Heart right ventricle (tissue), 16 donors: ENCODE measurements at regions of chr10 and their contacts with region 1.

Region 1: GRCh38 chr10:45249978-45250693 is 65.3 kb downstream of the OR13A1 start:
- DNase-seq: no peak
- ATAC-seq: peak in 7 of 8 donors; percentile 28 to 76 (median 51)
- H3K4me3 ChIP-seq: peak overlapping the region in 6 of 10 donors; percentile 5 to 36 (median 21)
- H3K27ac ChIP-seq: no peak overlapping the region
- H3K4me1 ChIP-seq: peaks cover 0 to 14% (median 0%) of the 10 kb centered on the region in 9 donors
- H3K27me3 ChIP-seq: peaks cover 0 to 10% (median 0%) of the 10 kb centered on the region in 7 donors
- CTCF ChIP-seq: peak; percentile 47 to 77 (median 70)

Region 2: DNA sequence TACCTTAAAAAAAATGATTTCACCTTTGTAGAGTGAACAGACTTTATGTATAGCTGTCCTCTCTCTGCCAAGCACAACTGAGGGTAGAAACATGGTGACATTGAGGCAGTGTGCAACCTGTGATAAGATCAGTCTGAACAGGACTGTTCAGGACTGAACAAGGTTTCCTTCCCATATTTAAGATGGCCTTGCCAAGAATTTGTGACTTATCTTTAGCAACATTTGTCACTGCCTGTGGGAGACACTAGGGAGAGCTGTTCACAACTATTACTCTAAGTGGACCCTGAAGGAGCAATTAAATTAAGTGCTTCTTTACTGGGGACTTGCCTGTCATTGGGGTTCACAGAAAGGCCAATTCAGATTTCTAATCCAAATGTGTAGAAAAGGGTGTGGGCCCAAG is 58.6 kb after region 1 on chr10:
- intact Hi-C with region 1: loop called in 1 of 10 experiments (anchors 10 kb)
- DNase-seq: no peak
- ATAC-seq: peak in 3 of 8 donors; percentile 19 to 31 (median 30)
- H3K4me3 ChIP-seq: no peak overlapping the region
- H3K27ac ChIP-seq: no peak overlapping the region
- H3K4me1 ChIP-seq: no peaks in the 10 kb centered on the region
- H3K27me3 ChIP-seq: peaks cover 0 to 10% (median 0%) of the 10 kb centered on the region in 7 donors
- CTCF ChIP-seq: peak in 4 of 9 donors; percentile 23 to 34 (median 30)

Region 3: DNA sequence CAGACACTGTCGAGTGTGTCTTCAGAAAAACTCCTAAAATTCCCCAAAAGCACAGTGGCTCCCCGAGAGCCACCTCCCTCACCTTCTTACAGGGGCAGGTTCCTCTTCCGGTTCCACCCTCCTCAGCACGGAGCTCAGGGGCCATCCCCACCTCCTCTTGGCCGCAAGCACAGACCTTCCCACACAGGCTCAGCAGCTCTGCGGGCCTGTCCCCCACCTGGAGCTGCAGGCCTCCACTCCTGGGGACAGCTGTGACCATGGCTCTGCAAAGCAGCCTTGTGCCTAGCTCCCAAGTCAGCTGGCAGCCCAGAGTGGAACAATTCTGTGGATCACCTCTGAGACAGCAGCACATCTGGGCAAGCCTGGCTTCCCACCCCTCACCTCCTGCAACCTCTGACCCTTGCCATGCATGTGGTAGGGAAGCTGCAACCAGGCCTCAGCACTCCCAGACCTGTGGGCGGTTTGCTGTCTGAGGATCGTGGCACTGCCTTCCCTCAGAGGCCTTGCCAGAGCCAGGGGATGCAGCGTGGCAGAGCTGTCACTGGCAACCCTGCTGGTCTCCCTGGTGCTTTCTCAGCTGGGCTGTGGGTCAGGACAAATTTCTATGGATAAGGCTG is 203.6 kb after region 1 on chr10:
- intact Hi-C with region 1: loop called in 1 of 10 experiments (anchors 10 kb)
- DNase-seq: no peak
- ATAC-seq: peak in 3 of 8 donors; percentile 20 to 66 (median 48)
- H3K4me3 ChIP-seq: no peak overlapping the region
- H3K27ac ChIP-seq: peak overlapping the region in 7 of 10 donors; percentile 18 to 67 (median 43)
- H3K4me1 ChIP-seq: peaks cover 11 to 32% (median 24%) of the 10 kb centered on the region in 9 donors
- H3K27me3 ChIP-seq: no peaks in the 10 kb centered on the region
- CTCF ChIP-seq: no peak

Region 4: GRCh38 chr10:45809837-45810236 is 559.7 kb after region 1 on chr10:
- intact Hi-C with region 1: loop called in 1 of 10 experiments (anchors 10 kb)
- DNase-seq: no peak
- ATAC-seq: no peak
- H3K4me3 ChIP-seq: no peak overlapping the region
- H3K27ac ChIP-seq: no peak overlapping the region
- H3K4me1 ChIP-seq: peaks cover 0 to 4% (median 0%) of the 10 kb centered on the region in 9 donors
- H3K27me3 ChIP-seq: no peaks in the 10 kb centered on the region
- CTCF ChIP-seq: no peak

Region 5: GRCh38 chr10:46247808-46248569 is 997.9 kb after region 1 on chr10:
- intact Hi-C with region 1: no loop called
- DNase-seq: peak in 1 of 2 donors; percentile 45
- ATAC-seq: peak in 6 of 8 donors; percentile 60 to 83 (median 64)
- H3K4me3 ChIP-seq: no peak overlapping the region
- H3K27ac ChIP-seq: no peak overlapping the region
- H3K4me1 ChIP-seq: peaks cover 0 to 15% (median 7%) of the 10 kb centered on the region in 9 donors
- H3K27me3 ChIP-seq: no peaks in the 10 kb centered on the region
- CTCF ChIP-seq: no peak